ENCODE measurements at regions of chr7 and their contacts with region 1.

Region 1: GRCh38 chr7:135672560-135673359 is 10.4 kb downstream of the STMP1 start:
- DNase-seq: no peak
- H3K4me3 ChIP-seq: no peak overlapping the region
- H3K27ac ChIP-seq: peak overlapping the region in 2 of 4 donors; percentile 27 to 32
- H3K4me1 ChIP-seq: peaks cover 0 to 62% (median 14%) of the 10 kb centered on the region in 3 donors
- H3K27me3 ChIP-seq: no peaks in the 10 kb centered on the region
- CTCF ChIP-seq: peak; percentile 28 to 86 (median 81)
- POLR2A ChIP-seq: no peak

Region 2: GRCh38 chr7:135795846-135796570 is 123.2 kb after region 1 on chr7:
- intact Hi-C with region 1: loop called (anchors 10 kb)
- DNase-seq: no peak
- H3K4me3 ChIP-seq: no peak overlapping the region
- H3K27ac ChIP-seq: peak overlapping the region in 3 of 4 donors; percentile 14 to 40 (median 37)
- H3K4me1 ChIP-seq: peaks cover 0 to 22% (median 0%) of the 10 kb centered on the region in 3 donors
- H3K27me3 ChIP-seq: peaks cover 0 to 5% (median 0%) of the 10 kb centered on the region in 4 donors
- CTCF ChIP-seq: no peak
- POLR2A ChIP-seq: no peak

Region 3: GRCh38 chr7:136009488-136010079 is 336.8 kb after region 1 on chr7:
- intact Hi-C with region 1: loop called (anchors 10 kb)
- DNase-seq: no peak
- H3K4me3 ChIP-seq: no peak overlapping the region
- H3K27ac ChIP-seq: no peak overlapping the region
- H3K4me1 ChIP-seq: peaks cover 0 to 4% (median 0%) of the 10 kb centered on the region in 3 donors
- H3K27me3 ChIP-seq: peaks cover 0 to 3% (median 0%) of the 10 kb centered on the region in 4 donors
- CTCF ChIP-seq: peak; percentile 74 to 84 (median 76)
- POLR2A ChIP-seq: no peak

Measured in esophagus squamous epithelium (tissue), 5 donors.